ENCODE measurements at regions of chr18 and their contacts with region 1.

Region 1: GRCh38 chr18:63422087-63422809 is at the start of gene VPS4B:
- DNase-seq: peak; percentile 100
- H3K4me3 ChIP-seq: peak within 1 kb of the TSS; percentile 87 to 95 (median 94)
- H3K27ac ChIP-seq: peak within 1 kb of the TSS; percentile 85 to 96 (median 88)
- H3K4me1 ChIP-seq: peaks cover 18 to 55% (median 31%) of the 10 kb centered on the region in 4 donors
- H3K27me3 ChIP-seq: no peaks in the 10 kb centered on the region
- CTCF ChIP-seq: peak in 1 of 3 experiments; percentile 17
- EP300 ChIP-seq: no peak
- POLR2A ChIP-seq: peak; percentile 71
- total RNA-seq, gene VPS4B: 25.7 to 32.1 (median 29.4) TPM

Region 2: DNA sequence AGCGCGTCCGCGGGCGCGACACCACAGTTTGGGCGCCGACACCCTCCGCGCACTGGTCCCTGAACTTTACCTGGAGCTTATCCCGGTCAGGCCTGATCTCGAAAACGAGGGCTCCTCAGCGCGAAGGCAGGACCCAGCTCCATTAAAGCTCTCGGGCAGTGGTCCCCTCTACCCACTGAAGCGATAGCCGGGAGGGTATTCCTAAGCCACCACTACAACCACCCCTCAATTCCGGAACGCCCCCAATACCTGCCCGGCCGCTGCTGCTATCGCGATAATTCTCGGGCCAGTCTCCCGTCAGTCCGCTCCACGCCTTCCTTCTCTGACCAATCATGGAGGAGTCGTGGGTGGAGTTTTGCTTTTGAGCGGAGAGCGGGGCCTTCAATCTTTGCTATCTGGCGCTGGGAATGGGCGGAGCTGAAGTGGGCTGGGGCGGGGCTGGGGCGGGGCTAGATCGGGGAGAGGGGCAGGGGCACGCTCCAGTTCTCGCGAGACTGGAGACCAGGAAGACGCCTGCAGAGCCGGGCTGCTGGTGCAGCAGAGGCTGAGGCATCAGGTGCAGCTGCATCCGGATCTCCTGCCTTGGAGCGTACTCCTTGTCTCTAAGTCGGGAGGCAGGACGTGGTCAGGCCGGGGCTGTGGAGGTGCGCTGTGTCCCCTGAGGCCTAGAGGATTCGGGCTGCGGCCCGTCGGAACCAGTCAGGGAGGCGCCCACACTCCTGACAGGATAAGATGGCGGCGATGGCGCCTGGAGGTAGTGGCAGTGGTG is 1235.3 kb before region 1 on chr18 and contains the starts of genes PIGN and RELCH:
- intact Hi-C with region 1: loop called (anchors 10 kb)
- DNase-seq: peak; percentile 99
- H3K4me3 ChIP-seq: peak within 1 kb of the TSS; percentile 88 to 98 (median 94)
- H3K27ac ChIP-seq: peak within 1 kb of the TSS; percentile 78 to 89 (median 84)
- H3K4me1 ChIP-seq: peaks cover 30 to 60% (median 50%) of the 10 kb centered on the region in 4 donors
- H3K27me3 ChIP-seq: no peaks in the 10 kb centered on the region
- CTCF ChIP-seq: no peak
- EP300 ChIP-seq: no peak
- POLR2A ChIP-seq: peak; percentile 43
- total RNA-seq, gene PIGN: 10.6 to 16.9 (median 12.4) TPM
- total RNA-seq, gene RELCH: 15.9 to 17.9 (median 17.5) TPM

Region 3: GRCh38 chr18:63367053-63367953 is 54.9 kb before region 1 on chr18 and contains the start of gene KDSR:
- intact Hi-C with region 1: loop called (anchors 5 kb)
- DNase-seq: peak; percentile 96
- H3K4me3 ChIP-seq: peak within 1 kb of the TSS; percentile 85 to 97 (median 90)
- H3K27ac ChIP-seq: peak within 1 kb of the TSS; percentile 95 to 98 (median 98)
- H3K4me1 ChIP-seq: peaks cover 11 to 35% (median 27%) of the 10 kb centered on the region in 4 donors
- H3K27me3 ChIP-seq: no peaks in the 10 kb centered on the region
- CTCF ChIP-seq: no peak
- EP300 ChIP-seq: no peak
- POLR2A ChIP-seq: peak; percentile 54
- total RNA-seq, gene KDSR: 41.8 to 58.8 (median 49.8) TPM

Region 4: GRCh38 chr18:63476666-63477065 is 54.4 kb after region 1 on chr18 and contains the start of gene SERPINB5:
- intact Hi-C with region 1: no loop called
- DNase-seq: no peak
- H3K4me3 ChIP-seq: no peak within 1 kb of the TSS
- H3K27ac ChIP-seq: no peak within 1 kb of the TSS
- H3K4me1 ChIP-seq: no peaks in the 10 kb centered on the region
- H3K27me3 ChIP-seq: no peaks in the 10 kb centered on the region
- CTCF ChIP-seq: no peak
- EP300 ChIP-seq: no peak
- POLR2A ChIP-seq: no peak
- total RNA-seq, gene SERPINB5: not detected

Region 5: GRCh38 chr18:63578357-63578958 is 156.2 kb after region 1 on chr18:
- intact Hi-C with region 1: no loop called
- DNase-seq: no peak
- H3K4me3 ChIP-seq: no peak overlapping the region
- H3K27ac ChIP-seq: no peak overlapping the region
- H3K4me1 ChIP-seq: no peaks in the 10 kb centered on the region
- H3K27me3 ChIP-seq: no peaks in the 10 kb centered on the region
- CTCF ChIP-seq: peak; percentile 46 to 53 (median 53)
- EP300 ChIP-seq: no peak
- POLR2A ChIP-seq: no peak

Measured in esophagus muscularis mucosa (tissue), 4 donors.